IMR-90 (cell line): ENCODE measurements at regions of chr11 and their contacts with region 1.

Region 1: DNA sequence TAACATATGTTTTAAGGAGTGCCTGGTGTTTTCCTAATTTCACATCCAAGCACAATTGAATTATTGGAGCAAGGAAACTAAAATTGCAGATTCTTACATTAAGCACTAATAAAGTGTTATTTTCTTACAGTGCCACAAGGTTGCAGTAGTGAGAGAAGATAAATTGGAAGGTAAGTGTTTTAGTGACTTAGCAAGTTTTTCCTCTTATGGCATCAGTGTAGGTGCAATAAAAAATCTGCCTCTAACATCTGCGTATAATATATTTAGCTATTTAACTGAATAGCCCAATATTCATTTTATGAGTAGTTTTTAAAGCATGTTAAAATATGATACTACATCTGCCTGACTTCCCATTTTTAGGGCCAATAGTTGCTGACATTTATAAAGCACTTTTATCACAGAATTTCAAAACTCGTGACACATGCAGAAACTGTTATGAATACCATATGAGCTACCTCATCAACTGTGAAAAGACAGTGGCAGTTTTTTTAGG is 19.0 kb downstream of the POLD3 start:
- DNase-seq: peak; percentile 87
- ATAC-seq: peak; percentile 86
- H3K4me3 ChIP-seq: no peak overlapping the region
- H3K27ac ChIP-seq: no peak overlapping the region
- H3K4me1 ChIP-seq: peaks cover 8% of the 10 kb centered on the region
- H3K27me3 ChIP-seq: no peaks in the 10 kb centered on the region
- CTCF ChIP-seq: peak; percentile 60
- POLR2A ChIP-seq: no peak
- RAD21 ChIP-seq: peak; percentile 65

Region 2: DNA sequence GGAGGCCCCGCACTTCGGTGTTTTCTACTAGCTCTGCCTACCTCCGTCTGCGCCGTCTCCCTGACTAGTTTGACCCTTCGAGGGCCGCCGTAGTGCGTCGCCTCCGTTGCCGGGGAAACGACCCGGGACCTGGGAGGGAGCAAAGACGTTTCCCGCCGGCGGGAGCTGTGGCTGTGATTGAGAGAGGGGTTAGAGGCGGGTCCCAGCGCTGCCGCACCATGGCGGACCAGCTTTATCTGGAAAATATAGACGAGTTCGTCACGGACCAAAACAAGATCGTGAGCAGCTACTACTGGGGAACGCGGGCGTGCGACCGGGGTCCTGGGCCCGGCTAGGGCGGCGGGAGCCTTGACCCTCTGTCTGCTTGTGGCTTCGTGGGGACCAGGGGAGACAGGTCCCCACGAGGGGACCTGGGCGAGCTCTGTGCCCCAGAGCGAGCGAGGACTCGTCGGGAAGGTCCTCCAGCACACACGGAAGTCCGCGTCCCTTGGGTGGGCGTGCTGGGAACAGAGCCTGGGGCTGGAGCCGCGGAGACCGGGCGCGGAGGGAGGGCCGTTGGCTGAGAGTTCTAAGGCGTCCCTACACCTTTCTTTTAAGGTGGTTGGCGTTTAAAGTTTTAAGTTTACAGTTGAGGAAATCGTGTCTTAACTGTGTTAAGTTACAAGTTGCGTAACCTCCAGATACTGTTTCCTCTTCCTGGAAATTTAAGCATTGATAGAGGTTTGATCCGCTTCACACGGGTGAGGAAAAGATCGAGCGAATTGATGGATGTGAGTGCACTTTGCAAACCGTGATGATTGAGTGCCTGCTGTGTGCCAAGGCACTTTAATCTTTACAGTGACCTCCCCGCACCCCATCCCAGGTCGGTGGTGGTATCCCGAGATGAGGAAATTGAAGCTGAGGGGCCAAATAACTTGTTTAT is 18.7 kb before region 1 on chr11 and contains the start of gene POLD3:
- CTCF ChIA-PET with region 1: no interaction called
- POLR2A ChIA-PET with region 1: no interaction called
- dilution Hi-C with region 1: no loop called
- in situ Hi-C with region 1: no loop called
- intact Hi-C with region 1: loop called (anchors 1 kb)
- DNase-seq: peak; percentile 81
- ATAC-seq: peak; percentile 99
- H3K4me3 ChIP-seq: peak within 1 kb of the TSS; percentile 65
- H3K27ac ChIP-seq: peak within 1 kb of the TSS; percentile 71
- H3K4me1 ChIP-seq: no peaks in the 10 kb centered on the region
- H3K27me3 ChIP-seq: no peaks in the 10 kb centered on the region; the same call in 1 of the 2 replicates
- CTCF ChIP-seq: no peak
- POLR2A ChIP-seq: peak; percentile 52
- RAD21 ChIP-seq: peak; percentile 8; the same call in 1 of the 2 replicates
- total RNA-seq, gene POLD3: 9.1 and 10.6 TPM in 2 replicates

Region 3: DNA sequence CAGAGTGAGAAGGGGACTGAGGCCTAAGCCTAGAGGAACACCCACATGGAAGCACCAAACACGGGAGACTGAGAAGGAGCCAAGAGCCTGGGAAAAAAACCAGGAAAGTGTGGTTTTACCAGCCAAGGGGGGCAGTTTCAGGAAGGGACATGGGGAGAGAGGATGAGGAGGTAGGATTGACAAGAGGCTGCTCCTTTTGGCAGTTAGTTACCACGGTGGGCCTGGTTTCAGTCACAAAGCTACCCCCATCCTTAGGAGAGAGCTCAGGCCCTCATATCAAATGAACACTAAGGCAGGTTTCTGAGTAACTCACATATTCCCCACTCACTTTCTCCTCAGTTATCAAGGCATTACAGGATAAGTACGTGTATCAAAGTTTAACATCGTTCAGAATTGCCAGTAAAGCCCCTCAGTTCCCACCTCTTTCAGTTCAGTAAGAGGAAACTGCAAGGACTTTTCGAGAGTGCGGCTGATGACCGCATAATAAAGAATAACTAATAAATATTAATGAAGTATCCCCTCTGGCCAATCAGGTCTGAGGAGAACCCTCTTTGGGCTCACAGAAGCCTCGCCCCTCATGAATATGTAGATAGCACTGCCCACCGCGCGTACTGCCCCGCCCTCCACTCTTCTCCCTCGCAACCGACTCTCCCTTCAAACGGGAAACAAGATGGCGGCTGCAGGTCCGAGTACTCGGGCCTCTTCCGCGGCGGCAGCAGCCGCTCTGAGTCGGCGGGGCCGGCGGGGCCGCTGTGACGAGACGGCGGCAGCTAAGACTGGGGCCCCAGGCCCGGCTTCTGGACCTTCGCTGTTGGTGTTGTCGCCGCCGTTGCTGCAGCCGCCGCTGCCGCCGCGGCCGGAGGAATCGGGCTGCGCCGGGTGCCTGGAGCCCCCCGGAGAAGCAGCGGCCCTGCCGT is 137.1 kb after region 1 on chr11 and contains the start of gene RNF169:
- CTCF ChIA-PET with region 1: interaction called, 3 read pairs
- POLR2A ChIA-PET with region 1: no interaction called
- dilution Hi-C with region 1: loop called (anchors 25 kb)
- in situ Hi-C with region 1: no loop called
- intact Hi-C with region 1: no loop called
- DNase-seq: peak; percentile 96
- ATAC-seq: peak; percentile 99
- H3K4me3 ChIP-seq: peak within 1 kb of the TSS; percentile 90
- H3K27ac ChIP-seq: peak within 1 kb of the TSS; percentile 85
- H3K4me1 ChIP-seq: peaks cover 13% of the 10 kb centered on the region
- H3K27me3 ChIP-seq: no peaks in the 10 kb centered on the region
- CTCF ChIP-seq: no peak
- POLR2A ChIP-seq: peak; percentile 92
- RAD21 ChIP-seq: no peak
- total RNA-seq, gene RNF169: 23.3 and 28.1 TPM in 2 replicates

Region 4: DNA sequence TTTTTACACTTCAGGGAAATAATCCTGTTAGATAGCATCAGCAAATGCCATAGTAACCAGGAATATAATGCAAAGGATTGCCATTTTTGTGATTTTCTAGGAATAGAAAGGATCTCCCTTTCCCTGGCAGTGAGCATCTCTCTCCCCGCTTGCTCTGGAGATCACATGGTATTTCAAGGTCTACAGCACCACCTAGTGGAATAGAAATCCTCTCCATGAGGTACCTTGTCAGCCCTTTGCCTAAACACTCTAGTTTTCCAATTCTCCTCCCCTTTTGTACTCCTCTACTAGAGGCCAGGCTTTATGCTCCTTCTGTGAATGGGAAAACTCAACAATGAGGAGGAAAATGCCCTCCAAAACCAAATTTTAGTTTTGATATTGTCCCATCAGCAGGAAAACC is 259.1 kb after region 1 on chr11:
- CTCF ChIA-PET with region 1: no interaction called
- POLR2A ChIA-PET with region 1: no interaction called
- dilution Hi-C with region 1: no loop called
- in situ Hi-C with region 1: loop called (anchors 25 kb)
- intact Hi-C with region 1: loop called (anchors 10 kb)
- DNase-seq: peak; percentile 66
- ATAC-seq: peak; percentile 54; the same call in 1 of the 2 replicates
- H3K4me3 ChIP-seq: no peak overlapping the region
- H3K27ac ChIP-seq: no peak overlapping the region
- H3K4me1 ChIP-seq: no peaks in the 10 kb centered on the region
- H3K27me3 ChIP-seq: no peaks in the 10 kb centered on the region
- CTCF ChIP-seq: peak; percentile 47
- POLR2A ChIP-seq: no peak
- RAD21 ChIP-seq: peak; percentile 67

Region 5: DNA sequence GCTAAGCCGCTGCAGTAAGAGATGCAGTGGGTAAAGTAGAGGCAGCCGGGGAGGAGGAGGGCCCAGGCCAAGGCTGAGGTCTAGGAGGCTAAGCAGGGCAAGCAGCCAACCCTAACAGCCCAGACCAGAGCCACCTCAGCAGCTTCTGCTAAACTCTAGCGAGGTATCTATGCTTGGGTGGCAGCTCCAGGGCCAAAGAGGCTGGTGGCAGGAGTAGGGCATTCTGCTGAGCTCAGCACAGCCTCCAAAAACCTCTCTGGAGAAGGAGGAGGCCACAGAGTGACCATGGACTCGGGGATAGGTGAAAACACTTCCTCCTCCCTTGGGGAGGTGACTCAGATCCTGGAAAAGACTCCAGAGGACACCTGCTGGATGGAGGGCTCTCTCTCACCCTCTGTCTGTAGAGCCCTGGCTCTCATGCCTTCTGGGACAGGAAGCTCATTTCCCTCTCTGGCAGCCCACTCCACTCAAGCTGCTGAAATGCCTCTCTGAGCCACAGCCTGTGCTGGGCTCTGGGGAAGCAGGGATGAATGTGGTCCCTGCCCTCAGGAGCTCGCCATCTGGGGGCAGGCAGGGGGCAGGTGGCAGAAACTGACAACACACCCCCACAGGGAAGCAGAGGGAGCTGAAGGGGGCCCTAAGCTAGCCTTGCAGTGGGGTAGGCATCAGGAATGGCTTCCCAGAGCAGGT is 612.7 kb after region 1 on chr11:
- CTCF ChIA-PET with region 1: no interaction called
- POLR2A ChIA-PET with region 1: no interaction called
- dilution Hi-C with region 1: no loop called
- in situ Hi-C with region 1: no loop called
- intact Hi-C with region 1: no loop called
- DNase-seq: no peak
- ATAC-seq: no peak
- H3K4me3 ChIP-seq: no peak overlapping the region
- H3K27ac ChIP-seq: no peak overlapping the region
- H3K4me1 ChIP-seq: no peaks in the 10 kb centered on the region
- H3K27me3 ChIP-seq: peaks cover 27% of the 10 kb centered on the region
- CTCF ChIP-seq: no peak
- POLR2A ChIP-seq: no peak
- RAD21 ChIP-seq: no peak